Right ventricle myocardium superior (tissue), 1 donor: ENCODE measurements at regions of chr15 and their contacts with region 1.

Region 1: DNA sequence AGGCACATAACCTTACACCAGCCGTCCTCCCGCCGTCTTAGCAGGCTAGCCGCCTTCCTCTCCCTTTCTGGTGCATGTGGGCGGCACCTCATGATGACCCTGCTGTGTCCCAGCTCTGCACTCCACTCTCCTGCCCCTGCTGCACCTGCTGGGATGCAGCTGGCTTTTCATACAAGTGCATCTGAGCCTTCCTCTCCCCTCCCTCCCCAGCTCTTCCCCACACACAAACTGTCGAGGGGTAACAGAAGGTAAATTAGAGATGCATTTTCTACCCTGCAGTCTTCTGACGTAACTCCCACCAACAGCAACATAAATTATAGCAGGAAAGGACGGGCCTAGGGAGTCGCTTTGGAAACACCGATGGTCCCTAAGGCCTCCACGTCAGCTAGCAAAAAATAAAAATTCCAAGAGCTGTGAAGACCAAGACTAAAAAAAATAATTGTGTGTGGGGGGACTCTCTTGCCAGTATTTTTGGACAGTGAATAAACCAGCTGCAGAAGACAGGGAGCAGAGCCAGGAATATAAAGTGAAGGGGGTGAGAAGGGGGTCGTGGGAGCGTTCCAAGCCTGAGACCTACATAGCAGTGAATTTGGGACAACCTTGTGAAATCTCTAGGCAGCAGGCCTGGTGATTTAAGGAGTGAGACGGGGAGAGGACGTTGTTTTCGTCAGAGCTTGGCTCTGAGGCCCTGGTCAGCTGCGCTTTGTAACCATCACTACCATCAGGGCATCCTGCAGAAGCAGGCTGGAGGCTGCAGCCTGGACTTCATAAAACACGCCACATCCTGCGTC is 216.2 kb downstream of the ADAMTS17 start:
- DNase-seq: peak; percentile 76
- ATAC-seq: peak; percentile 92

Region 2: DNA sequence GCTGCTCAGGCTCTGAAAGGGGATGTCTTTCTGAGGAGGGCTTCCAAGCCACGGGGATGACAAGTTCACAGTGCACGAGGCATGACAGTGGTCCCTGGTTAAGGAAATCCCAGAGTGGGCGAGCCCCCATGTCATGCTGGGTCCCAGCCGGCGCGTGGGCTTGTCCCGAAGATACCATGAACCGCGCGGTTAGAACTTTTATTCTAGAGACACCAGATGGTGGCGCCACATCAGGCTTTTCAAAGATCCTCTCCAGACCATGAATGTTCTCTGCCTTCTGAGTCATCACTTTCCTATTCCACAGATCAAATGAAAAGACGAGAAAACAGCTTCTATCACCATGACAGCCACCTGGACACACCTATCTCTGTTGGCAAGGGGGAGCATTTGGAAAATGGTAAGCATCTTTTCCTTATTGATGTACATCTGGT is 164.6 kb before region 1 on chr15:
- intact Hi-C with region 1: loop called (anchors 10 kb)
- DNase-seq: no peak
- ATAC-seq: peak; percentile 85

Region 3: DNA sequence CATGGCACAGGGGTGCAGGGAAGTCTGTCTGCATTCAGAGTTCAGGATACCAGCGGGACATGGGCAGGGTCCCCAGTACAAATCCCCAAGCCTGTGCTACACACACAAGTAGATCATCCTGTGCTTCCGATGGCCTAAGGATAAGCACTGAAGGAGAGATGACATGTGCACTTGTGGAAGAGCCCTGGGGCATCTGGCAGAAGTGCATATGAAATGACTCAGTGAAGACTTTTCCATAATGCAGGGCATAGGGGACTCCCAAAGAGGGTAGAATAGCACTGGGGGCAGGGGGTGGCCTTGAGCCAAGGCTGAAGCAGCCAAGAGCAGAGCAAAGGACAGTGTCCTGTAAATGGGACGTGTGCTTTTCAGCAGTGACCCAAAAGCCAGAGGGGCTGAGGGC is 193.3 kb after region 1 on chr15:
- intact Hi-C with region 1: no loop called
- DNase-seq: no peak
- ATAC-seq: no peak